ENCODE measurements at regions of chr1 and their contacts with region 1.

Region 1: GRCh38 chr1:27321813-27322577 is at the start of gene TMEM222:
- DNase-seq: peak; percentile 88 to 98
- H3K4me3 ChIP-seq: peak within 1 kb of the TSS; percentile 85 to 97
- H3K27ac ChIP-seq: peak within 1 kb of the TSS; percentile 89 to 95
- H3K4me1 ChIP-seq: peaks cover 0 to 12% of the 10 kb centered on the region in 2 donors
- H3K27me3 ChIP-seq: no peaks in the 10 kb centered on the region
- CTCF ChIP-seq: peak in 2 of 3 experiments; percentile 33 to 40
- total RNA-seq, gene TMEM222: 28.6 TPM

Region 2: DNA sequence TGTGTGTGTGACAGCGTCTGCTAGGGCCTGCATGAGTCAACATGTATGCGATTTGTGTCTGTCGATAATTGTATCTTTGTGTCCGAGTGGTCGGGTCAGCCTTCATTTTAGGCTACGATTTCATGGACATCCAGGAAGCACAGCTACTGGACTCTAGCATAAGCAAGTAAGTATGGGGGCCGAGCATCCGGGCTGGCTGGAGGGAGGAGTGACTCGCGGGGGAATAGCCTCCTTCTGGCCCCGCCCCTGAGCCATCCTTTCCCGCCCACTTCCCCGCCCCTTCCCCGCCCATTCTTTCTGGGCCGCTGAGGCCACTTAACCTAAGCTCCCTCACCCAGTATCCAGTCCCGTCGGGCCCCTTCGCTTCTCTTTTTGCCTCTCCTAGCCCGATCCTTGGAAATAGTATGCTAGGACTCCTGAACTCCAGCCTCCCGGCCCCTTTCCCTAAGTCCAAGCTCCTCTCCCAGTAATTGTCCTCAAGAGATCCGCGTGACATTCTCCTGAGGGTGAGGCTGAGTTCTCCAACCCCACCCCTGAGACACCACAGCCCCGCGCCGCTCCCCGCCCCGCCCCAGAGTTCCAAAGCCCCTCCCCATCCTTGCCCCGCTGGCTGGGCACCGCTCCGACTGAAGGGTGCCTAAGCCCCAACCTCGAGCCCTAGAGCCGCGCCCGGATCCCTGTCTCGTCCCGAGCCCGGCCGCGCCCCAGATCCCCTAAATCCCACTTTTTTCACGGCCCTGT is 43.5 kb after region 1 on chr1:
- intact Hi-C with region 1: loop called (anchors 1 kb)
- DNase-seq: peak; percentile 66 to 95
- H3K4me3 ChIP-seq: peak overlapping the region; percentile 70 to 96
- H3K27ac ChIP-seq: peak overlapping the region; percentile 97 to 99
- H3K4me1 ChIP-seq: peaks cover 21 to 23% of the 10 kb centered on the region in 2 donors
- H3K27me3 ChIP-seq: no peaks in the 10 kb centered on the region
- CTCF ChIP-seq: no peak